Aorta (tissue), 5 donors: ENCODE measurements at regions of chr19 and their contacts with region 1.

Region 1: GRCh38 chr19:14472202-14472938 is 2.8 kb downstream of the PTGER1 start:
- DNase-seq: peak; percentile 80 to 95
- ATAC-seq: peak; percentile 75
- H3K4me3 ChIP-seq: no peak overlapping the region
- H3K27ac ChIP-seq: no peak overlapping the region
- H3K4me1 ChIP-seq: no peaks in the 10 kb centered on the region
- H3K27me3 ChIP-seq: no peaks in the 10 kb centered on the region

Region 2: DNA sequence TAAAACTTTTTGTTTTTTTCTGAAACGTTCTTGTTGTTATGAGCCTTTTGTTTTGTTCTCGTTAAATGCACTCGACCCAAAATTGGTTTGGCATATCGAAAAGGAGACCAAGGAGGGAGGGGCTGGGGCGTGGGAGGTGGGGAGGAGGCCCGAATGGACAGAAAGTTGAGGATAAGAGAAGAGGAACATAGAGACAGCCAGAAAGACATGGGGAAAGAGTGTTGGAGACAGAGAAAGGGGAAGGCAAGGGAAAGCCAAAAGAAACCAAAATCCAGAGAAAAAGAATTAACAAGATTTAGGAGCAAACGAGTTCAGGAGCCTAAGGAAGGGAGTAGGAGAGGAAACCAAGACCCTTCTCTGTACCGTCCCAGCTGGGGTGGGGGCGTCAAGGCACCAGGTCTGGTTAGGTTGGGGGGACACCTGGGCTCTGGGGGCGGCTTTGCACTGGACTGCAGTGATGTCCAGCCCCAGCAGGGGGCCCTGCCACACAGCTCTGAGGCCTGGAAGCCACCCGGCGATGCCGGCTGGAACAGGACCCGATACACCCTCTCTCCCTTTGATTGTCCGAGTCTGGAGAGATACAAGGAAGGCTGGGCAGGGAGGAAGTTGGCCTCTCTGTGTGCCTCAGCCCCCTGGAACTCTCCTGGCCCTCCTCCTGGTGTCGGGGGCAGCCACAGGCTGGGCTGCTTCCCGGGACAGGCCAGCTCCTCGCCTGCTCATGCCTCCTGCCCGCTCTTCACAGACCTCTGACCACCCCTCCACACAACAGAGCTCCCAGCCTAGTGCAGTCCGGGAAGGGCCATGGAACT is 324.4 kb before region 1 on chr19:
- intact Hi-C with region 1: loop called (anchors 5 kb)
- DNase-seq: peak; percentile 79 to 90
- ATAC-seq: peak; percentile 90
- H3K4me3 ChIP-seq: no peak overlapping the region
- H3K27ac ChIP-seq: no peak overlapping the region
- H3K4me1 ChIP-seq: no peaks in the 10 kb centered on the region
- H3K27me3 ChIP-seq: no peaks in the 10 kb centered on the region

Region 3: GRCh38 chr19:14347999-14348889 is 124.1 kb before region 1 on chr19:
- intact Hi-C with region 1: loop called (anchors 10 kb)
- DNase-seq: peak; percentile 79 to 90
- ATAC-seq: peak; percentile 90
- H3K4me3 ChIP-seq: no peak overlapping the region
- H3K27ac ChIP-seq: no peak overlapping the region
- H3K4me1 ChIP-seq: no peaks in the 10 kb centered on the region
- H3K27me3 ChIP-seq: no peaks in the 10 kb centered on the region

Region 4: DNA sequence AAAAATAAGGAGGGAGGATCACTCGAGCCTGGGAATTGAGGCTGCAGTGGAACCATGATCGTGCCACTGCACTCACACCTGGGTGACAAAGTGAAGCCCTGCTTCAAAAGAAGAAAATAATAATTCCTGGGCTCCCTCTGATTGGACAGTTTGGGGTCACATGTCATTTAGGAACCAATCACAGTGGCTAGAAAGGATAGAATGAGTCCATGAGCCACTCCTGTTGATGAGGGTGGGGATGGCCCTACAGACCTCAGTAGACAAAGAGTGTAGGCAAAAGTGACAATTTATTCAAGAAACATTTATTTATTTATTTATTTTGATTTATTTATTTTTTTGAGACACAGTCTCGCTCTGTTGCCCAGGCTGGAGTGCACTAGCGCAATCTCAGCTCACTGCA is 117.9 kb before region 1 on chr19:
- intact Hi-C with region 1: loop called (anchors 10 kb)
- DNase-seq: no peak
- ATAC-seq: no peak
- H3K4me3 ChIP-seq: no peak overlapping the region
- H3K27ac ChIP-seq: no peak overlapping the region
- H3K4me1 ChIP-seq: no peaks in the 10 kb centered on the region
- H3K27me3 ChIP-seq: no peaks in the 10 kb centered on the region